PC-3 (cell line): ENCODE measurements at regions of chr13 and their contacts with region 1.

Region 1: DNA sequence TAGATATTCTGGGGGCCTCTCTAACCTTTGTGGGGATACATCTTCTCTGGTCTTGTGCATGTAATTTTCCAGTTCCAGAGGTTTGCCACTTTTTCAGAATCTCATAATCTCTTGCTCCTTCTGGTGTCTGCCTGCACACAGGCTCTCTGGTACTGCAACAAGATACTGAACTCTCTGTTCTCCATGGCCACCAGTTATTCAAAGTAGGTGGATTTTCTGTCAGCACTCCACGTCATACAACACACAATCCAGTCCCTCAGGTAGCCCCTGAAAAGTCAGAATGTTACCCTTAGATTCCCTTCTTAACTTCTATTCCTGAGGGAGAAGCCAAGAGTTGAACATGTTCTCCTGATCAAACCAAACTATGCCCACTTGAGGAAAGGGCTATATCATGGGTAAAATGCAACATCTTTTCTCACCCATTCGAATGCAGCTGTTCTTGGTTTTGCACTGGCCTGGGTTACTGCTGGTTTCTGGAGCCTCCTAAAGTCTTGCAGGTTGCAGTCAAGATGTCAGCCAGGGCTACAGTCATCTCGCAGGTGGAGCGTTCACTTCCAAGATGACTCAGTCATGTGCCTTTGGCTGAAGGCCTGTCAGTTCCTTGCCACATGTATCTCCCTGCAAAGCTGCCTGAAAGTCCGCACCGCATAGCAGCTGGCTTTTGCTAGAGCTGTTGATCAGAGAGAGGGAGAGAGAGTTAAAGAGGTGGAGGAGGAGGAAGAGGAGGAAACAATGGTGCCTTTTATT is 57.7 kb upstream of the TUBA3C start:
- DNase-seq: peak; percentile 3
- ATAC-seq: no peak
- H3K4me3 ChIP-seq: no peak overlapping the region
- H3K27ac ChIP-seq: no peak overlapping the region
- H3K4me1 ChIP-seq: no peaks in the 10 kb centered on the region
- H3K27me3 ChIP-seq: no peaks in the 10 kb centered on the region
- CTCF ChIP-seq: no peak

Region 2: DNA sequence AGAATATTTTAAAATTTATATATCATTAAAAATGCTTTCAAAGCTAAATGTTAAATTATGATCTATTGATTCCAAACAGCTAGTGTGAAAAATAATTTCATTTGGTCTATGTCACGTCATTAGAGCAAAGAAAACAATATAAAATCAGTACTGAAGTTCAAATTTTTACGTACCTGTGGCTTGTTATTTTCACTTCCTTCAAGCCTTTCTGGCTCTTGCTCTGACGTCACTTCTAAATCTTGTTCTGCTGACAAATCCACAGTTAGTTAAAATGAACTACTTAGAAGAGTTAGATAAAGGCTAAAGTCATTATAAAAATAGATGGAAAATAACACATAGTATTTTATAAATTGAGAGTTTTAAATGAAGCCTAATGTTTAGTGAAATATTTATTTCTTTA is 90.1 kb after region 1 on chr13:
- CTCF ChIA-PET with region 1: no interaction called
- POLR2A ChIA-PET with region 1: no interaction called
- intact Hi-C with region 1: no loop called
- DNase-seq: no peak
- ATAC-seq: no peak
- H3K4me3 ChIP-seq: no peak overlapping the region
- H3K27ac ChIP-seq: no peak overlapping the region
- H3K4me1 ChIP-seq: no peaks in the 10 kb centered on the region
- H3K27me3 ChIP-seq: peaks cover 9% of the 10 kb centered on the region; the same call in 1 of the 2 replicates
- CTCF ChIP-seq: no peak

Region 3: GRCh38 chr13:19587635-19588300 is 348.5 kb after region 1 on chr13:
- CTCF ChIA-PET with region 1: no interaction called
- POLR2A ChIA-PET with region 1: no interaction called
- intact Hi-C with region 1: loop called (anchors 5 kb)
- DNase-seq: peak; percentile 80
- ATAC-seq: peak; percentile 84
- H3K4me3 ChIP-seq: no peak overlapping the region
- H3K27ac ChIP-seq: peak overlapping the region; percentile 24
- H3K4me1 ChIP-seq: peaks cover 14% of the 10 kb centered on the region; the same call in 1 of the 2 replicates
- H3K27me3 ChIP-seq: no peaks in the 10 kb centered on the region
- CTCF ChIP-seq: peak; percentile 90